ENCODE measurements at regions of chr3 and their contacts with region 1.

Region 1: GRCh38 chr3:13427662-13428603 is 7.8 kb upstream of the NUP210 start:
- DNase-seq: peak in 7 of 9 donors; percentile 61 to 73 (median 66)
- ATAC-seq: peak; percentile 95
- H3K4me3 ChIP-seq: peak overlapping the region; percentile 6
- H3K4me3 Mint-ChIP-seq: peak overlapping the region; percentile 22 to 82 (median 68)
- H3K27ac ChIP-seq: peak overlapping the region; percentile 71
- H3K27ac Mint-ChIP-seq: peak overlapping the region; percentile 69 to 98 (median 91)
- H3K4me1 ChIP-seq: peaks cover 10 to 35% of the 10 kb centered on the region in 2 donors
- H3K4me1 Mint-ChIP-seq: peaks cover 18 to 55% (median 42%) of the 10 kb centered on the region in 7 donors
- H3K27me3 ChIP-seq: no peaks in the 10 kb centered on the region
- H3K27me3 Mint-ChIP-seq: no peaks in the 10 kb centered on the region

Region 2: GRCh38 chr3:13414040-13414729 is 13.7 kb before region 1 on chr3:
- CTCF ChIA-PET with region 1: interaction called, 16 read pairs
- POLR2A ChIA-PET with region 1: interaction called, 35 read pairs
- intact Hi-C with region 1: loop called in 1 of 2 experiments (anchors 1 kb)
- DNase-seq: peak; percentile 52 to 66 (median 60)
- ATAC-seq: peak; percentile 95
- H3K4me3 ChIP-seq: peak overlapping the region; percentile 40
- H3K4me3 Mint-ChIP-seq: peak overlapping the region; percentile 77 to 100 (median 86)
- H3K27ac ChIP-seq: peak overlapping the region; percentile 96
- H3K27ac Mint-ChIP-seq: peak overlapping the region; percentile 82 to 97 (median 93)
- H3K4me1 ChIP-seq: peaks cover 53 to 56% of the 10 kb centered on the region in 2 donors
- H3K4me1 Mint-ChIP-seq: peaks cover 37 to 78% (median 61%) of the 10 kb centered on the region in 7 donors
- H3K27me3 ChIP-seq: no peaks in the 10 kb centered on the region
- H3K27me3 Mint-ChIP-seq: no peaks in the 10 kb centered on the region

Measured in naive thymus-derived CD4-positive, alpha-beta T cell (primary cell).